GM12878 (cell line): ENCODE measurements at regions of chr11 and their contacts with region 1.

Region 1: DNA sequence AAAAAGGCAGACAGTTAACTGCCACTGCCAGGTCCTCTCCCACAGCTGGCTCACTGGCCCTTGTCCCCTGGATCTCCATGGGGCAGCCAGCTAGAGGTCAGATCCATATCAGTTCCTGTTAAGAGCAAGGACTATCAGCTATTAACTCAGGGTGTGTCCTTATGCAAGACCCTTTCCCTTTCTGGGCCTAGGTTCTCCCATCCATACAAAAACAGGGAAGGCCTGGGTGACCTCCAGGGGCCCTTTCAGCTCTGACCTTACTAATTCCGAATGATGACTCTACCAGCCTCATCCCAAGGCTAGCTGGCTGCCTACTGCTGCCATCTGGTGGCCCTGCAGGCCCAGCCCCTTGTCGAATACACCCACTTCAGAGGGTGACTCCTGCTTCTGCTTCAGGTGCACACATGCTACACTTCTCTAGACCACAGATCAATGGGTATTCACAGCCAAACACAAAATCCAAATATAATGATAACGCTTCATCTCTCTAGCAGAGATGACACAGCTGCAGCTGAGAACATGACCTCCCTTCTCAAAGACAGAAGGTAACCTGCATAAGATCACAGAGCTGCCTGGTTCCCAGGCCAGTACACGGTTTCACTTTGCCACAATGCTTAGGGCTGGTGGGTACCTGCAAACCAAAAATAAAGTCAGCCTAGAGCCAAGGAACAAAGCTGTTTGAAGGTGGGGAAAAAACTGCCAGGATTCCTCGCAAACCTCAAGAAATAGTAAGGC is 34.1 kb downstream of the SERGEF start:
- DNase-seq: no peak
- ATAC-seq: peak; percentile 90
- H3K4me3 ChIP-seq: no peak overlapping the region
- H3K27ac ChIP-seq: no peak overlapping the region
- H3K4me1 ChIP-seq: no peaks in the 10 kb centered on the region
- H3K27me3 ChIP-seq: no peaks in the 10 kb centered on the region
- CTCF ChIP-seq: peak; percentile 51 to 75 (median 70)
- EP300 ChIP-seq: no peak
- POLR2A ChIP-seq: no peak
- RAD21 ChIP-seq: peak; percentile 53

Region 2: GRCh38 chr11:17598700-17599459 is 379.8 kb before region 1 on chr11:
- CTCF ChIA-PET with region 1: interaction called, 18 read pairs
- POLR2A ChIA-PET with region 1: no interaction called
- RAD21 ChIA-PET with region 1: interaction called, 8 read pairs
- SMC1A ChIA-PET with region 1: interaction called, 16 read pairs
- in situ Hi-C with region 1: loop called (anchors 5 kb)
- intact Hi-C with region 1: loop called (anchors 1 kb)
- DNase-seq: peak; percentile 1
- ATAC-seq: peak; percentile 98
- H3K4me3 ChIP-seq: no peak overlapping the region
- H3K27ac ChIP-seq: no peak overlapping the region
- H3K4me1 ChIP-seq: no peaks in the 10 kb centered on the region
- H3K27me3 ChIP-seq: no peaks in the 10 kb centered on the region; a peak in 1 of 4 replicates
- CTCF ChIP-seq: peak; percentile 95 to 98 (median 98)
- EP300 ChIP-seq: no peak
- POLR2A ChIP-seq: no peak
- RAD21 ChIP-seq: peak; percentile 84

Region 3: DNA sequence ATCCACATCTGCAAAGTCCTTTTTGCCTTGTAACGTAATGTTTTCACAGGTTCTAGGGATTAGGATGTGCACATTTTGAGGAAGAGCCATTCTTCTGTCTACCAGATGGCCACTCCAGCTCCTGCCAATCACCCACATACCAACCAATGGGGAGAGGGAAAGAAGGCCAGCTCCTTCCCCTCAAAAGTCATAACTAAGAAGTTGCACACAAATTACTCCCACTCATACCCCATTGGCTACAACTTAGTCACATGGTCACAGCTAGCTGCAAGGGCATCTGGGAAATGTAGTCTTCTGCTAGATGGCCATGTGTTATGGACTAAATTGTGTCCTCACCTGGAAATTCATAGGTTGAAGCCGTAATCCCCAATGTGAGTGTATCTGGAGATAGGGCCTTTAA is 274.8 kb before region 1 on chr11:
- CTCF ChIA-PET with region 1: no interaction called
- POLR2A ChIA-PET with region 1: no interaction called
- RAD21 ChIA-PET with region 1: no interaction called
- SMC1A ChIA-PET with region 1: no interaction called
- in situ Hi-C with region 1: no loop called
- intact Hi-C with region 1: no loop called
- DNase-seq: peak; percentile 5
- ATAC-seq: peak; percentile 63
- H3K4me3 ChIP-seq: no peak overlapping the region
- H3K27ac ChIP-seq: no peak overlapping the region
- H3K4me1 ChIP-seq: no peaks in the 10 kb centered on the region
- H3K27me3 ChIP-seq: no peaks in the 10 kb centered on the region; a peak in 1 of 4 replicates
- CTCF ChIP-seq: no peak
- EP300 ChIP-seq: no peak
- POLR2A ChIP-seq: no peak
- RAD21 ChIP-seq: no peak

Region 4: GRCh38 chr11:17760102-17761029 is 218.4 kb before region 1 on chr11:
- CTCF ChIA-PET with region 1: interaction called, 77 read pairs
- POLR2A ChIA-PET with region 1: no interaction called
- RAD21 ChIA-PET with region 1: interaction called, 12 read pairs
- SMC1A ChIA-PET with region 1: interaction called, 8 read pairs
- in situ Hi-C with region 1: loop called (anchors 5 kb)
- intact Hi-C with region 1: loop called (anchors 1 kb)
- DNase-seq: peak; percentile 12
- ATAC-seq: peak; percentile 96
- H3K4me3 ChIP-seq: no peak overlapping the region
- H3K27ac ChIP-seq: no peak overlapping the region
- H3K4me1 ChIP-seq: no peaks in the 10 kb centered on the region
- H3K27me3 ChIP-seq: no peaks in the 10 kb centered on the region
- CTCF ChIP-seq: peak; percentile 57 to 71 (median 65)
- EP300 ChIP-seq: no peak
- POLR2A ChIP-seq: no peak
- RAD21 ChIP-seq: peak; percentile 63

Region 5: GRCh38 chr11:17927681-17928347 is 50.9 kb before region 1 on chr11:
- CTCF ChIA-PET with region 1: no interaction called
- POLR2A ChIA-PET with region 1: no interaction called
- RAD21 ChIA-PET with region 1: no interaction called
- SMC1A ChIA-PET with region 1: interaction called, 3 read pairs
- in situ Hi-C with region 1: loop called (anchors 5 kb)
- intact Hi-C with region 1: no loop called
- DNase-seq: no peak
- ATAC-seq: no peak
- H3K4me3 ChIP-seq: no peak overlapping the region
- H3K27ac ChIP-seq: no peak overlapping the region
- H3K4me1 ChIP-seq: no peaks in the 10 kb centered on the region; the same call in 1 of the 2 replicates
- H3K27me3 ChIP-seq: no peaks in the 10 kb centered on the region
- CTCF ChIP-seq: no peak
- EP300 ChIP-seq: no peak
- POLR2A ChIP-seq: no peak
- RAD21 ChIP-seq: no peak

Region 6: DNA sequence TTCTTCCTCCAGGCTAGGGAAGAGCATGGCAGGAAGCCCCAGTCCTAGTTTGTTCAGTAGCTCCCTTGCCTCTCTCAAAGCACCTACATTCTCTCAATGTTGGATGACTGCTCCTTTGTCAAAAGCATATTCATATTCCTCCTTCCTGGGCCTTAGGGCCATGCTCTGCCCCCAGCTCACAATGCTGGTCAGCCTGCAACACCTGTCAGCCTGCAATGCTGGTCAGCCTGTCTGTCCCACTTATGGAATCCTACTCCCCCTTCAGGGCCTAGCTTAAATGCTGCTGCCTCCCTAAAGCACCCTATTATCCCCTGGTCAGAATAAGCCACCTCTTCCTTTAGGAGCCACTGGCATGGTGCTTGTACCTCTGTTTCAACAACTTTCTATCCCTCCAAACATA is 11.1 kb before region 1 on chr11:
- CTCF ChIA-PET with region 1: interaction called, 39 read pairs
- POLR2A ChIA-PET with region 1: no interaction called
- RAD21 ChIA-PET with region 1: interaction called, 7 read pairs
- SMC1A ChIA-PET with region 1: interaction called, 5 read pairs
- in situ Hi-C with region 1: no loop called
- intact Hi-C with region 1: no loop called
- DNase-seq: no peak
- ATAC-seq: no peak
- H3K4me3 ChIP-seq: no peak overlapping the region
- H3K27ac ChIP-seq: no peak overlapping the region
- H3K4me1 ChIP-seq: no peaks in the 10 kb centered on the region
- H3K27me3 ChIP-seq: no peaks in the 10 kb centered on the region
- CTCF ChIP-seq: no peak
- EP300 ChIP-seq: no peak
- POLR2A ChIP-seq: no peak
- RAD21 ChIP-seq: no peak

Region 7: DNA sequence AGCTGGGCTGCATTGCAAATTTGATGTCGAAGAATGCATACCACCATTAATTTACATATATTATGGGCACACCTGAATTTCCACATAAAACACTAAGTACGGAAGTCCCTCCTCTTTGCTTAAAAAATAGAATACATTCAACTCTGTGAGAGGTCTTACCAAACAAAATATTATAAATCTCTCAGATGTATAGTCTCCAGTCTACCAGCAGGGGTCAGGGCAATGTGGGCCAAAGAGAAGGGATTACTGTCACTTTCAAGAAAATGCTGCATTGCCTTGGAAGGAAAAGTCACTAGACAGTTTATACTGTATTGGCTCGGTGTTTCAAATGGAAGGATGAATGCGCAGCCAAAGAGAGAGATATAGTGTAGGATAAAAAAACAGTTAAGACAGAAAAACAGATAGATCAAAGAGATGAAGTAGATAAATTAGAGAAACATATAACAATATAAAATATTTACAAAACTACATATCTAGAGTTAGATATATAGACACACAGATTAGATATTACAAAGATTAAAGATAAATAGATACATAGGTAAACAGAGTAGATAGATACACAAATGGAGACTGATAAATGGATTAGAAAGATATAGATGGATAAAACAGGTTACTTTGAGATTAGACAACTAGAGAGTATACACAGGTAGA is 13.2 kb after region 1 on chr11:
- CTCF ChIA-PET with region 1: interaction called, 87 read pairs
- POLR2A ChIA-PET with region 1: no interaction called
- RAD21 ChIA-PET with region 1: no interaction called
- SMC1A ChIA-PET with region 1: interaction called, 5 read pairs
- in situ Hi-C with region 1: no loop called
- intact Hi-C with region 1: no loop called
- DNase-seq: no peak
- ATAC-seq: peak; percentile 95
- H3K4me3 ChIP-seq: no peak overlapping the region
- H3K27ac ChIP-seq: no peak overlapping the region
- H3K4me1 ChIP-seq: no peaks in the 10 kb centered on the region
- H3K27me3 ChIP-seq: no peaks in the 10 kb centered on the region
- CTCF ChIP-seq: peak; percentile 76 to 83 (median 80)
- EP300 ChIP-seq: no peak
- POLR2A ChIP-seq: no peak
- RAD21 ChIP-seq: peak; percentile 83

Region 8: DNA sequence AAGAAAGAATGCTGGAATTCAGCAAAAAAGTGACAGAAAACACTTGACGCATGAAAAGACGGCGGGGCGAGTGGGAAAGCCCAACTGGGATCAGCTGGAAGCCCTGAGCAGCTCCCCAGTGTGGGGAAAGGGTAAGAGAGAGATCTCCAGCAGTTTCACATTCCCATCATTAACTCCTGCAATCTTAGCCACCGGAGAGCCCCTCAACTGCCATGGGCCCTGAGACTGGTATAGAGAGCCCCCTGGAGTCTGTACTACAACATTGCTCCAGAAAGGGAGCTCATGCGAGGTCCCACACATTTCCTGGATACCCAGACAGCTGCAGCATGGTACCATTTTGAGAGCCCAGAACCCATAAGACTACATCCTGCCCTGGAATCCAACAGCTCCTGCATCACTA is 225.0 kb after region 1 on chr11:
- CTCF ChIA-PET with region 1: no interaction called
- POLR2A ChIA-PET with region 1: no interaction called
- RAD21 ChIA-PET with region 1: no interaction called
- SMC1A ChIA-PET with region 1: no interaction called
- in situ Hi-C with region 1: no loop called
- intact Hi-C with region 1: no loop called
- DNase-seq: no peak
- ATAC-seq: peak; percentile 87
- H3K4me3 ChIP-seq: no peak overlapping the region
- H3K27ac ChIP-seq: no peak overlapping the region
- H3K4me1 ChIP-seq: no peaks in the 10 kb centered on the region
- H3K27me3 ChIP-seq: no peaks in the 10 kb centered on the region; a peak in 1 of 4 replicates
- CTCF ChIP-seq: peak; percentile 55 to 62 (median 56)
- EP300 ChIP-seq: no peak
- POLR2A ChIP-seq: no peak
- RAD21 ChIP-seq: peak; percentile 54